ENCODE measurements at regions of chr17 and their contacts with region 1.

Region 1: GRCh38 chr17:8118769-8119580 is 661 bp upstream of the ALOXE3 start:
- DNase-seq: peak; percentile 70 to 90 (median 83)
- ATAC-seq: peak; percentile 62
- H3K4me3 ChIP-seq: peak overlapping the region; percentile 69 to 77
- H3K4me3 Mint-ChIP-seq: peak overlapping the region; percentile 93
- H3K27ac ChIP-seq: peak overlapping the region; percentile 32 to 53
- H3K27ac Mint-ChIP-seq: peak overlapping the region; percentile 95
- H3K4me1 ChIP-seq: peaks cover 46% of the 10 kb centered on the region
- H3K4me1 Mint-ChIP-seq: peaks cover 45% of the 10 kb centered on the region
- H3K27me3 ChIP-seq: peaks cover 0 to 57% of the 10 kb centered on the region in 2 experiments
- H3K27me3 Mint-ChIP-seq: peaks cover 33% of the 10 kb centered on the region
- CTCF ChIP-seq: peak; percentile 88

Region 2: GRCh38 chr17:7922845-7923628 is 195.9 kb before region 1 on chr17:
- CTCF ChIA-PET with region 1: no interaction called
- POLR2A ChIA-PET with region 1: no interaction called
- intact Hi-C with region 1: no loop called
- DNase-seq: peak; percentile 65 to 91 (median 85)
- ATAC-seq: peak; percentile 96
- H3K4me3 ChIP-seq: peak overlapping the region; percentile 64
- H3K4me3 Mint-ChIP-seq: peak overlapping the region; percentile 82
- H3K27ac ChIP-seq: peak overlapping the region; percentile 71 to 84
- H3K27ac Mint-ChIP-seq: peak overlapping the region; percentile 95
- H3K4me1 ChIP-seq: peaks cover 16% of the 10 kb centered on the region
- H3K4me1 Mint-ChIP-seq: peaks cover 18% of the 10 kb centered on the region
- H3K27me3 ChIP-seq: no peaks in the 10 kb centered on the region
- H3K27me3 Mint-ChIP-seq: no peaks in the 10 kb centered on the region
- CTCF ChIP-seq: no peak

Region 3: DNA sequence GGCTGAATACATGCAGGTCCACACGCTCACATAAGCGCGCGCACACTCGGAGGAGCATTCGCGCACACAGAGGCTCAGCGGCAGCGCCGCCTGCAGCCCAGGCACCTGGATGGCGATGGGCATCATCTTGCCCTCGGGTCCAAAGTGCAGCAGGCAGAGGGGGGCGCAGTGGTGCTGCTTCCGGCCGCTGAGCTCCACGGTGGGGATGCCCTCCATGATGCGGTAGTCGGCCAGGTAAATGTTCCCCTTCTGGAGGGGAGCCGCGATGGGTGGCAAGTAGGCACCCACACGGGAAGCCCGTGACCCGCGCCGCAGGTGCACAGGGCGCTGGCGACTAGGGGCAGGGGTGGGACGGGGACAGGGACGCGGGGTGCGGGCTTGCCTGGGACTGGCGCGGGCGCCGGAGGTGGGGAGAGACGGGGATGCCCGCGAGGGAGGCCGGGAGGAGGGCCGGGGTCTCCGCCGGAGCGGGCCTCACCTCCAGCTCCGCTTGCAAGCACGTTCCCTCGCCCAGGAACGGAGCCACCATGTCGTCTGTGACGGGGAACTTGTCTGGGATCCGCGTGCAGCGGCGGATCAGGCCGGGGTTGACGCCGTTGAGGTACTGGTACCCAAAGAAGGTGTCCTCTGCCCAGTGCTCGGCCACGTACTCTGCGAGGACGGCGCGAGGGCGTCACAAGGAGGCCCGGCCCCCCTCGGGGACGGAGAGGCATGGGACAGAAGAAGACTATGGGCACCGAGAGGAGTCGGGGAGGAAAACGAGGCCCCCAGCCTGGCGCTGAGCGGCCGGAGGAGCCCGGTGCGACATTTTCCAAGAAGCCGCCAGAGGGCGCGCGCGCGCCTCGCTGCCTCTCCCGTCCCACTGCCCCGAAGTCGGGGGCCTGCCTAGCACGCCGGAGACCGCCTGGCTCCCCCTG is 39.4 kb before region 1 on chr17:
- CTCF ChIA-PET with region 1: interaction called, 66 read pairs
- POLR2A ChIA-PET with region 1: interaction called, 7 read pairs
- intact Hi-C with region 1: loop called (anchors 2 kb)
- DNase-seq: peak; percentile 64 to 93 (median 82)
- ATAC-seq: peak; percentile 83
- H3K4me3 ChIP-seq: peak overlapping the region; percentile 64 to 80
- H3K4me3 Mint-ChIP-seq: peak overlapping the region; percentile 90
- H3K27ac ChIP-seq: peak overlapping the region; percentile 57 to 71
- H3K27ac Mint-ChIP-seq: peak overlapping the region; percentile 91
- H3K4me1 ChIP-seq: peaks cover 7% of the 10 kb centered on the region
- H3K4me1 Mint-ChIP-seq: peaks cover 18% of the 10 kb centered on the region
- H3K27me3 ChIP-seq: peaks cover 2% of the 10 kb centered on the region in 2 experiments
- H3K27me3 Mint-ChIP-seq: peaks cover 6% of the 10 kb centered on the region
- CTCF ChIP-seq: peak; percentile 89

Region 4: GRCh38 chr17:8156246-8156992 is 37.4 kb after region 1 on chr17:
- CTCF ChIA-PET with region 1: interaction called, 15 read pairs
- POLR2A ChIA-PET with region 1: interaction called, 16 read pairs
- intact Hi-C with region 1: loop called (anchors 1 kb)
- DNase-seq: peak; percentile 100
- ATAC-seq: peak; percentile 68
- H3K4me3 ChIP-seq: peak overlapping the region; percentile 82 to 90
- H3K4me3 Mint-ChIP-seq: no peak overlapping the region
- H3K27ac ChIP-seq: peak overlapping the region; percentile 100
- H3K27ac Mint-ChIP-seq: no peak overlapping the region
- H3K4me1 ChIP-seq: peaks cover 77% of the 10 kb centered on the region
- H3K4me1 Mint-ChIP-seq: peaks cover 68% of the 10 kb centered on the region
- H3K27me3 ChIP-seq: no peaks in the 10 kb centered on the region
- H3K27me3 Mint-ChIP-seq: no peaks in the 10 kb centered on the region
- CTCF ChIP-seq: no peak

Region 5: GRCh38 chr17:8204761-8205555 is 86.0 kb after region 1 on chr17:
- CTCF ChIA-PET with region 1: interaction called, 3 read pairs
- POLR2A ChIA-PET with region 1: interaction called, 3 read pairs
- intact Hi-C with region 1: loop called in 1 of 2 experiments (anchors 5 kb)
- DNase-seq: no peak
- ATAC-seq: no peak
- H3K4me3 ChIP-seq: no peak overlapping the region
- H3K4me3 Mint-ChIP-seq: no peak overlapping the region
- H3K27ac ChIP-seq: no peak overlapping the region
- H3K27ac Mint-ChIP-seq: no peak overlapping the region
- H3K4me1 ChIP-seq: peaks cover 2% of the 10 kb centered on the region
- H3K4me1 Mint-ChIP-seq: peaks cover 7% of the 10 kb centered on the region
- H3K27me3 ChIP-seq: no peaks in the 10 kb centered on the region
- H3K27me3 Mint-ChIP-seq: no peaks in the 10 kb centered on the region
- CTCF ChIP-seq: no peak

Region 6: GRCh38 chr17:8294814-8295316 is 175.9 kb after region 1 on chr17:
- CTCF ChIA-PET with region 1: interaction called, 9 read pairs
- POLR2A ChIA-PET with region 1: interaction called, 3 read pairs
- intact Hi-C with region 1: loop called in 1 of 2 experiments (anchors 1 kb)
- DNase-seq: no peak
- ATAC-seq: no peak
- H3K4me3 ChIP-seq: peak overlapping the region; percentile 80 to 98
- H3K4me3 Mint-ChIP-seq: peak overlapping the region; percentile 86
- H3K27ac ChIP-seq: peak overlapping the region; percentile 80 to 87
- H3K27ac Mint-ChIP-seq: peak overlapping the region; percentile 90
- H3K4me1 ChIP-seq: peaks cover 12% of the 10 kb centered on the region
- H3K4me1 Mint-ChIP-seq: peaks cover 30% of the 10 kb centered on the region
- H3K27me3 ChIP-seq: no peaks in the 10 kb centered on the region
- H3K27me3 Mint-ChIP-seq: no peaks in the 10 kb centered on the region
- CTCF ChIP-seq: no peak

Region 7: DNA sequence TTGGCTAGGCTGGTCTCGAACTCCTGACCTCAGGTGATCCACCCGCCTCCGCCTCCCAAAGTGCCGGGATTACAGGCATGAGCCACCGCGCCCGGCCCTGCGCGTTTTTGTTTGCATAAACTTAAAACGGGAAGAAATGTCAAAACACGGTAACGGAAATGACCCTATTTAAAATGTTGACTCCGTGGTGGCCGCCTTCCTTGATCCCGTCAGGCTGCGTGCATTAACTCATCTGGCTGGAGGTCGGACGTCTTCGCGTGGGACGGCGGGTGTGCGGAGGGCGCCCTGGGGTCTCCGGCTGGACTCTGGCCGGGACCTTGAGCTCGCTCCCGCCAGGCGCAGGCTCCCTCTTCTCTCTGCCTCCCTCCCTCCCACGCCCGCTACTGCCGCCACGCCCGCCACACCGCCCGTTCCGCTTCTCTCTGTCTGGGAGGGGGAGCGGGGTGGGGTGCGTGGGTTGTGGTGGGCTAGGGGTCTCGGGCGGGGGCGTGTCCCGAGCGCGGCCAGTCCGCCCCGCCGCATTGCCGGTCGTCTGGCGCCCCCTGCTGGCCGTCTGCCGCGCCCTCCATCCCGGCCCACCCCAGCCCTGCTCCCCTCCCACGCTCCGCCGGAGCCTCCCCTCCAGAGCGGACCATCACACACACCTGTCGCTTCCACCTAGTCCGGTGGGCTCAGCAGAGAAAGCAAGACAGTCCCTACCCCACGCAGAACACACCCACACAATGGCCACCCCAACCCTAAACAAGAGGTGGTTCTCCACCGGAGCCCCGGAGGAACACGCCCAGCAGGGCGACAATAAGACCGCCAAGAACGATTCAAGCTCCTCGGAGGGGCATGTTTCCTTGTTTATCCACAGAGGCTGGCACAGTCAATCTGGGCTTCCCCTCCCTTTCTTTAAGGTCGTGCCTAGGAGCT is 626.9 kb after region 1 on chr17:
- CTCF ChIA-PET with region 1: no interaction called
- POLR2A ChIA-PET with region 1: no interaction called
- intact Hi-C with region 1: loop called in 1 of 2 experiments (anchors 10 kb)
- DNase-seq: peak; percentile 56 to 91 (median 82)
- ATAC-seq: peak; percentile 72
- H3K4me3 ChIP-seq: peak overlapping the region; percentile 74 to 77
- H3K4me3 Mint-ChIP-seq: peak overlapping the region; percentile 94
- H3K27ac ChIP-seq: peak overlapping the region; percentile 69 to 82
- H3K27ac Mint-ChIP-seq: peak overlapping the region; percentile 94
- H3K4me1 ChIP-seq: peaks cover 15% of the 10 kb centered on the region
- H3K4me1 Mint-ChIP-seq: peaks cover 25% of the 10 kb centered on the region
- H3K27me3 ChIP-seq: no peaks in the 10 kb centered on the region
- H3K27me3 Mint-ChIP-seq: no peaks in the 10 kb centered on the region
- CTCF ChIP-seq: peak; percentile 94

Region 8: DNA sequence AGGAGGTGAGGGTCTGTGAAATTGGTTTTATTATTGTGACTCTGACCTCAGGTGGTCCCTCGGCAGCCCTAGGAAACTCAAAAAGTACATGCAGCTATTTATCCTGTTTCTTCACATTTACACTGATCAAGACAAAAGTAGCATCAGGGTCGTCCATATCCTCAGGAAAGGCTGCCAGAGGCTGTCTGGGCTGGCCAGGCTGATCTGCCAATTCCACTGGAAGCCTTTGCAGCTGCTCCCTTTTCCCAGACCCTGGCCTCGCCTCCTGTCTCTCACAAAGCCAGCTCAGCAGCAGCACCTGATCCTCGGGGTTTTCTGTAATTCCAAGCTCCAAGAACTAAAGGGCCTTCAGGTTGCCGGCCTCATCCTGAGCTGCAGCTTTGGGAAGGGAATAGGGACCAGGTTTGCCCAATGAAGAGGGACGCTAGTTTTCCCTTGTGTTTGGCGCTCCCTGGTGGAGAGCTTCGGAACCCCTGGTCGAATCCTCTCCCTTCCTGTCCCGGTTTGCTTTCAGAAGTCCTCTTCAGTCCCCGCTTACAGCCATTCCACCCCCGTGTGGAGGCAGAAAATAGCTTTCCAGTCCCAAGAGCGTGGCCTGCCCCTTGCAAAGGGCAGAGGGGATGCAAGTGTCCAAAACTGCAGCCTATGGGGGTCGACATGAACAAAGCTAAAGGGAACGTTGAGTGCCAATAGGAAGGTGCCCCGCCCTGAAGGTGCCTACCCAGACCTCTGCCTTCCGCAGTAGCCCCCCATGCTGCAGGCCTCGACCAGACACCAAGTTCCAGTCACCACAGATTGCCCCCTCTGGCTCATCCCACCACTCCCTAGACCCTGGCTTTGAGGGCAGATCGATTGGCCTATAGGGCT is 666.8 kb after region 1 on chr17:
- CTCF ChIA-PET with region 1: no interaction called
- POLR2A ChIA-PET with region 1: no interaction called
- intact Hi-C with region 1: no loop called
- DNase-seq: peak; percentile 27 to 73 (median 60)
- ATAC-seq: peak; percentile 56
- H3K4me3 ChIP-seq: no peak overlapping the region
- H3K4me3 Mint-ChIP-seq: no peak overlapping the region
- H3K27ac ChIP-seq: no peak overlapping the region
- H3K27ac Mint-ChIP-seq: no peak overlapping the region
- H3K4me1 ChIP-seq: no peaks in the 10 kb centered on the region
- H3K4me1 Mint-ChIP-seq: no peaks in the 10 kb centered on the region
- H3K27me3 ChIP-seq: peaks cover 0 to 2% of the 10 kb centered on the region in 2 experiments
- H3K27me3 Mint-ChIP-seq: no peaks in the 10 kb centered on the region
- CTCF ChIP-seq: peak; percentile 83

Measured in CD8-positive, alpha-beta T cell (primary cell).